Activated T-helper 1 cell treated with anti-CD3 and anti-CD28 coated beads, Interleukin-12 subunit alpha, Interleukin-12 subunit beta, Interleukin-2, Interleukin-4 antibody, amounts not matched to agents 30 ng/mL and 10 ng/mL and 1 ng/mL, durations not matched to agents 14 hours and 24 hours and 36 hours (primary cell): ENCODE measurements at regions of chr6 and their contacts with region 1.

Region 1: DNA sequence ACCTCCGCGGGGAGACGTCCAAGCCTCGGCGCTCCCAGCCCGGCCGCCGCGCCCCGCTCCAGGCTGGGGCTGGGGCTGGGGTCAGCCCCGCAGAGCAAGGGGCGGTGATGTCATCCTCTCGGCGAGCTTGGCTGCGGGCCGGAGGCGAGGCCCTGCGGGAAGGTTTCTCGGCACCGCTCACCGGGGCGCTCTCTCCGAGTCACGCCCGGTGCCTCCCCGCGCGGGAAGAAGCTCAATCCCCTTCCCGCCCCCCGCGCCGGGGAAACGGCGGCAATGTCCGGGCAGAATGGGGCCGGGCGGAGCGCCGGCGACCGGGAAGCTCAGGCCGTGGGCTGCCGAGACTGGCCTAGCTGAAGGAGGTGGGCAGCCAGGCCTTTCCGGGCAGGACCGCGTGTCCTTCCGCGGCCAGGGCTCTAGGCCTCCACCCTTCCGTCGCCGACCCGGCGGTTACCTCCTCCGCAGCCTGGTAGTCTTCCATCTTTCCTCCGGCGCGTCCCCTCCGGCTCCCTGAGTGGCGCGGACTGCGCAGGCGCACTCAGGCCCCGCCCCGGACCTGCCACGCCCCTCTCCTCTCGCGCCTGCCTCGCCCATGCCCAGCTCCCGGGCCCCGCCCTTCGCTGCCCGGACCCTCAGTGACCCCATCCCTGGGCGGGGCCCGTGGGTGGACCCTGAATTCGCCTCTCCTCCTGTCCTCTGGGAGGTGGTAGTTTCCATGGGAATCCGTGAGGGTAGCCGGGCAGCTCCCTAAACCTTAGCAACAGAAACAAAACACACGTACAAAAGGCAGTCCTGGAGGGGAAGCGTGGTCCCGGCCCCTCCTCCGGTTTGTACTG is at the start of gene DYNLT1:
- DNase-seq: peak; percentile 91
- H3K4me3 Mint-ChIP-seq: peak within 1 kb of the TSS; percentile 99
- H3K27ac Mint-ChIP-seq: peak within 1 kb of the TSS; percentile 97
- H3K4me1 Mint-ChIP-seq: peaks cover 81% of the 10 kb centered on the region
- H3K27me3 Mint-ChIP-seq: no peaks in the 10 kb centered on the region
- total RNA-seq, gene DYNLT1: 103 and 105 TPM in 2 replicates

Region 2: GRCh38 chr6:158207422-158207788 is 437.0 kb before region 1 on chr6:
- intact Hi-C with region 1: loop called (anchors 1 kb)
- DNase-seq: peak; percentile 68
- H3K4me3 Mint-ChIP-seq: peak overlapping the region; percentile 56
- H3K27ac Mint-ChIP-seq: peak overlapping the region; percentile 96
- H3K4me1 Mint-ChIP-seq: peaks cover 63% of the 10 kb centered on the region
- H3K27me3 Mint-ChIP-seq: no peaks in the 10 kb centered on the region

Region 3: DNA sequence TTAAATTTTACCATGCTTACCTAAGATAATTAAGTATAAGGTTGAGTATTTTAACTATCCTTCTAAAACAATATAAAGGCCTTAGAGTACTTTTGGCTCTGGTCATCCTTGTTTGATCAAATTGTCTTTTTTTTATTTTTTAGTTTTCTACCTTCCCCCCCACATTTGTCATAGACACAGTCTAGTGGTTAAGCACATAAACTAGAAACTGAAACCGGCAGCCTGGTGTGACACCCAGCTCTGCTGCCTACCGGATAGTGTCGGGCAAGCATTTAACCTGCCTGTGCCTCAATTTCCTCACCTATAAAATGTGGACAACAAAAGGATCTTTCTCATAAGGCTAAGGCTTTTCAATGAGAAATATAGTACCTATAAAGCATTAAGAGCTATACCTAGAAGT is 353.8 kb before region 1 on chr6:
- intact Hi-C with region 1: loop called (anchors 1 kb)
- DNase-seq: peak; percentile 52
- H3K4me3 Mint-ChIP-seq: peak overlapping the region; percentile 64
- H3K27ac Mint-ChIP-seq: peak overlapping the region; percentile 79
- H3K4me1 Mint-ChIP-seq: peaks cover 42% of the 10 kb centered on the region
- H3K27me3 Mint-ChIP-seq: no peaks in the 10 kb centered on the region

Region 4: DNA sequence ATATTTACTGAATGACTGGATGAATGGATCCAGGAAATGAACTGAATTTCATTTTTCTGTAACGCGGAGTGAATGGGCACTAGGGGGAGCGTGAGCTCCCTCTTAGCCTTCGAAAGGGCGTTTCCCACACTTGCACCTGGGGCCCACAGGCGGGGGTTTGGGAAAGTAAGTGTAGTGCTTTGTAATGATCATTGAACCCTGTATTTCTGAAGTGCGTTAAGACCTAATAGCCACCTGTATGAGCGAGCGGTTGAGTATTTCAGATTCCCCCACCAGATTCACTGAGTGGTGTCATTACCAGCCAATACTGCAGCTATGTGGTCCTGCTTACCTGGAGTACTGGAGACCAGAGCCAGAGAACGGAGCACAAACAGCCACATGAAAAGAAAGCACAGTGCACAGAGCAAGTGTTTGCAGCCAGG is 15.9 kb after region 1 on chr6:
- intact Hi-C with region 1: no loop called
- DNase-seq: no peak
- H3K4me3 Mint-ChIP-seq: no peak overlapping the region
- H3K27ac Mint-ChIP-seq: no peak overlapping the region
- H3K4me1 Mint-ChIP-seq: peaks cover 46% of the 10 kb centered on the region
- H3K27me3 Mint-ChIP-seq: no peaks in the 10 kb centered on the region

Region 5: DNA sequence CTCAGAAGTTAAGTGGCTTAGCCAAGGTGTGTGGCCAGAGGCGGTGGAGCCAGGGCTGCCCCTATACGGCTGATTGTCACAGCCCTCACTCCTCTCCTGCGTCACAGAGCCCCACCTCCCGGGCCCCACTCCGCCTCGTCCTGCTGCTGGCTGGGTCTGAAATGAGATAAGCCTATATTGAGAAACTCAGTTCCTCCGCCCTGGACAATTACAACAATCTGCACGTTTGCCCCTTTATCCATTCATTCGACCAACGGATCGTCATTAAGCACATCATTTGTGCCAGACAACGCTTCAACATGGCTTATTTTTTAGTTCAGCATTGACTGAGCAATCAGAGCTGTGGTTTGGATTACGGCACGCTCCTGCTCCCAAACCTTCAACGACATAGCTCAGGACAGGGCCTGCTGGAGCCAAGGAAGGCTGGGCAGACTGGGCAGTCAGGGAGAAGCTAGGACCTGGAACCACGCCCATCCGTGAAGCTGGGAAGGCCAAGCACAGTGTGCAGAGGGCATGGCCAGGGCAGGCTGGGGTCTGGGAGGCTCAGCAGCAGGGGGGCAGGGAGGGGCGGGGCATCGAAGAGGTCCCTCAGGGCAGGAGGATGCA is 191.3 kb after region 1 on chr6:
- intact Hi-C with region 1: no loop called
- DNase-seq: no peak
- H3K4me3 Mint-ChIP-seq: no peak overlapping the region
- H3K27ac Mint-ChIP-seq: no peak overlapping the region
- H3K4me1 Mint-ChIP-seq: no peaks in the 10 kb centered on the region
- H3K27me3 Mint-ChIP-seq: peaks cover 6% of the 10 kb centered on the region

Region 6: GRCh38 chr6:159679091-159680077 is 1034.9 kb after region 1 on chr6:
- intact Hi-C with region 1: loop called (anchors 10 kb)
- DNase-seq: no peak
- H3K4me3 Mint-ChIP-seq: no peak overlapping the region
- H3K27ac Mint-ChIP-seq: peak overlapping the region; percentile 82
- H3K4me1 Mint-ChIP-seq: peaks cover 27% of the 10 kb centered on the region
- H3K27me3 Mint-ChIP-seq: no peaks in the 10 kb centered on the region